PC-3 (cell line): ENCODE measurements at regions of chr5 and their contacts with region 1.

Region 1: GRCh38 chr5:115586601-115587048 is 15.7 kb downstream of the TICAM2 start:
- DNase-seq: peak; percentile 53
- ATAC-seq: peak; percentile 51
- H3K4me3 ChIP-seq: no peak overlapping the region
- H3K27ac ChIP-seq: no peak overlapping the region
- H3K4me1 ChIP-seq: peaks cover 13% of the 10 kb centered on the region; the same call in 1 of the 2 replicates
- H3K27me3 ChIP-seq: no peaks in the 10 kb centered on the region
- CTCF ChIP-seq: peak; percentile 75

Region 2: GRCh38 chr5:115377468-115378217 is 209.0 kb before region 1 on chr5:
- CTCF ChIA-PET with region 1: no interaction called
- POLR2A ChIA-PET with region 1: no interaction called
- intact Hi-C with region 1: loop called (anchors 2 kb)
- DNase-seq: peak; percentile 86
- ATAC-seq: peak; percentile 88
- H3K4me3 ChIP-seq: peak overlapping the region; percentile 9; the same call in 1 of the 2 replicates
- H3K27ac ChIP-seq: peak overlapping the region; percentile 41
- H3K4me1 ChIP-seq: peaks cover 29% of the 10 kb centered on the region
- H3K27me3 ChIP-seq: no peaks in the 10 kb centered on the region
- CTCF ChIP-seq: peak; percentile 28; the same call in 1 of the 2 replicates